PC-9 (cell line): ENCODE measurements at regions of chr5 and their contacts with region 1.

Region 1: GRCh38 chr5:159915904-159916840 is at the start of gene ADRA1B:
- DNase-seq: peak; percentile 45 to 87
- H3K4me3 ChIP-seq: peak within 1 kb of the TSS; percentile 64
- H3K27ac ChIP-seq: peak within 1 kb of the TSS; percentile 100
- H3K4me1 ChIP-seq: peaks cover 94% of the 10 kb centered on the region
- H3K27me3 ChIP-seq: no peaks in the 10 kb centered on the region
- CTCF ChIP-seq: peak; percentile 51
- total RNA-seq, gene ADRA1B: 4.6 and 6.0 TPM in 2 replicates

Region 2: DNA sequence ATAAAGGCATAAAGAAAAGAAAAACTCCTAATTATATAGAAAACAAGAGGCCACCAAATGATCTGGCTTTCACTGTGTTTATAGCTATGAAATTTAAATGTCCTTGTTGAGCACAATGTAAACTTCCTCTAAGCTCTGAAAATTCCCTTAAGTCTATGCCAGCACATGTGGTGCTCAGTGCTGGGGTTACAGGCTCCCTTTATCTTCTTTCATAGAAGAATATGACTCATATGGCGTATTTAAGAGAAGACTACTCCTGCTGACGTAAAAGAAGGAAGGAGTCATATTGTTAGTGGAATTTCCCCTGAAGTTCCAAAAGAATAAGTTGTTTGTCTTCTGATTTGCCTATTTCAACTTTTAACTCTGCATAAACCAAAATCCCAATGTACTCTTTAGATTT is 737.2 kb before region 1 on chr5:
- CTCF ChIA-PET with region 1: no interaction called
- POLR2A ChIA-PET with region 1: no interaction called
- intact Hi-C with region 1: loop called (anchors 5 kb)
- DNase-seq: peak; percentile 31 to 68
- H3K4me3 ChIP-seq: no peak overlapping the region
- H3K27ac ChIP-seq: peak overlapping the region; percentile 38
- H3K4me1 ChIP-seq: peaks cover 37% of the 10 kb centered on the region
- H3K27me3 ChIP-seq: no peaks in the 10 kb centered on the region
- CTCF ChIP-seq: no peak

Region 3: GRCh38 chr5:159331093-159331973 is 584.8 kb before region 1 on chr5:
- CTCF ChIA-PET with region 1: interaction called, 5 read pairs
- POLR2A ChIA-PET with region 1: no interaction called
- intact Hi-C with region 1: loop called (anchors 2 kb)
- DNase-seq: peak in 1 of 2 experiments; percentile 73
- H3K4me3 ChIP-seq: peak overlapping the region; percentile 56; the same call in 1 of the 2 replicates
- H3K27ac ChIP-seq: no peak overlapping the region
- H3K4me1 ChIP-seq: no peaks in the 10 kb centered on the region
- H3K27me3 ChIP-seq: peaks cover 24% of the 10 kb centered on the region
- CTCF ChIP-seq: peak; percentile 87

Region 4: GRCh38 chr5:159504857-159505304 is 411.3 kb before region 1 on chr5:
- CTCF ChIA-PET with region 1: no interaction called
- POLR2A ChIA-PET with region 1: no interaction called
- intact Hi-C with region 1: loop called (anchors 1 kb)
- DNase-seq: peak; percentile 89 to 93
- H3K4me3 ChIP-seq: peak overlapping the region; percentile 18; the same call in 1 of the 2 replicates
- H3K27ac ChIP-seq: peak overlapping the region; percentile 82
- H3K4me1 ChIP-seq: peaks cover 38% of the 10 kb centered on the region
- H3K27me3 ChIP-seq: no peaks in the 10 kb centered on the region
- CTCF ChIP-seq: no peak

Region 5: DNA sequence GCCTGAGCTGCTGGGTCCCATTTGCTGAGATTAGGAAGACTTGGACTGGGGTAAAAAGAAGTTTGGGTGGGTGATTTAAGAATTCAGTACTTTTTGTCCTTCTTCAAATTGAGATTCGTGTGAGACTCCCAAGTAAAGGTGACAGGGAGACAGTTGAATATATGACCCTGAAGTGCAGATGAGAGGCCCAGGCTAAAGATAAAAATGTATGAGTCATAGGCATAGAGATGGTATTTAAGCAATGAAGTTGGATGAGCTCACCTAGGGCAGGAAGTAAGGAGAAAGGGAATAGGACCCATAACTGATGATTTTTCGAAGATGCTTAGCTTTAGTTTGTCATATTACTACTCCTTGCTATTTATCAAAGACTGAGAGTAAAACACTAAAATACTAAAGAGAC is 255.8 kb before region 1 on chr5:
- CTCF ChIA-PET with region 1: no interaction called
- POLR2A ChIA-PET with region 1: no interaction called
- intact Hi-C with region 1: loop called (anchors 10 kb)
- DNase-seq: peak in 1 of 2 experiments; percentile 58
- H3K4me3 ChIP-seq: no peak overlapping the region
- H3K27ac ChIP-seq: no peak overlapping the region
- H3K4me1 ChIP-seq: peaks cover 18% of the 10 kb centered on the region; the same call in 1 of the 2 replicates
- H3K27me3 ChIP-seq: no peaks in the 10 kb centered on the region
- CTCF ChIP-seq: no peak

Region 6: GRCh38 chr5:159850160-159850559 is 66.0 kb before region 1 on chr5:
- CTCF ChIA-PET with region 1: no interaction called
- POLR2A ChIA-PET with region 1: no interaction called
- intact Hi-C with region 1: loop called (anchors 2 kb)
- DNase-seq: peak; percentile 45 to 95
- H3K4me3 ChIP-seq: no peak overlapping the region; the same call in 1 of the 2 replicates
- H3K27ac ChIP-seq: peak overlapping the region; percentile 95
- H3K4me1 ChIP-seq: peaks cover 36% of the 10 kb centered on the region
- H3K27me3 ChIP-seq: no peaks in the 10 kb centered on the region
- CTCF ChIP-seq: no peak

Region 7: GRCh38 chr5:159987031-159987674 is 71.0 kb after region 1 on chr5:
- CTCF ChIA-PET with region 1: interaction called, 31 read pairs
- POLR2A ChIA-PET with region 1: no interaction called
- intact Hi-C with region 1: loop called (anchors 1 kb)
- DNase-seq: peak; percentile 85 to 94
- H3K4me3 ChIP-seq: peak overlapping the region; percentile 65; the same call in 1 of the 2 replicates
- H3K27ac ChIP-seq: peak overlapping the region; percentile 55
- H3K4me1 ChIP-seq: peaks cover 13% of the 10 kb centered on the region
- H3K27me3 ChIP-seq: no peaks in the 10 kb centered on the region
- CTCF ChIP-seq: peak; percentile 90